A549 (cell line): ENCODE measurements at regions of chr10 and their contacts with region 1.

Region 1: GRCh38 chr10:49592726-49593563 is 17.2 kb upstream of the SLC18A3 start:
- DNase-seq: peak; percentile 62 to 79
- ATAC-seq: peak; percentile 81 to 93
- H3K4me3 ChIP-seq: no peak overlapping the region
- H3K27ac ChIP-seq: no peak overlapping the region
- H3K4me1 ChIP-seq: no peaks in the 10 kb centered on the region
- CTCF ChIP-seq: peak; percentile 77
- EP300 ChIP-seq: no peak
- POLR2A ChIP-seq: no peak
- RAD21 ChIP-seq: peak; percentile 45 to 57; a peak in 3 of 5 replicates

Region 2: DNA sequence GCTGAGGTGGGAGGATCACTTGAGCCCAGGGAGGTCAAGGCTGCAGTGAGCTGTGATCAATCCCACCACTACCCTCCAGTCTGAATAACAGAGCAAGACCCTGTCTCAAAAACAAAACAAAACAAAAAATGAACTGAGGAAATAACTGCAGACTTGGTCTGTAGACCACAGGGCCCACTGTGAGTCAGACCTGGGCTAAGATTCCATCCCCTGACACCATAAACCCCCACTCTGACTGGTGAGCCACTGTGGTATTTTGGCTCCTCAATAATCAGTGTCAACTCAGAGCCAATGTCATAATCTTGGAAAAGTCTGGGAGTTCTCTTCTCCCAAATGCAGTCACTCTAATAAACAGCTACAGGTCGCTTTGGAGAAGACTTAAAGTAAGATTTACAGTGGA is 30.1 kb before region 1 on chr10:
- CTCF ChIA-PET with region 1: interaction called, 16 read pairs
- POLR2A ChIA-PET with region 1: no interaction called
- DNase-seq: no peak
- ATAC-seq: no peak
- H3K4me3 ChIP-seq: no peak overlapping the region
- H3K27ac ChIP-seq: no peak overlapping the region
- H3K4me1 ChIP-seq: no peaks in the 10 kb centered on the region
- CTCF ChIP-seq: no peak
- EP300 ChIP-seq: no peak
- POLR2A ChIP-seq: no peak
- RAD21 ChIP-seq: no peak

Region 3: GRCh38 chr10:49579621-49580020 is 13.3 kb before region 1 on chr10:
- CTCF ChIA-PET with region 1: interaction called, 18 read pairs
- POLR2A ChIA-PET with region 1: no interaction called
- DNase-seq: no peak
- ATAC-seq: no peak
- H3K4me3 ChIP-seq: no peak overlapping the region
- H3K27ac ChIP-seq: no peak overlapping the region
- H3K4me1 ChIP-seq: no peaks in the 10 kb centered on the region
- CTCF ChIP-seq: no peak
- EP300 ChIP-seq: no peak
- POLR2A ChIP-seq: no peak
- RAD21 ChIP-seq: no peak

Region 4: DNA sequence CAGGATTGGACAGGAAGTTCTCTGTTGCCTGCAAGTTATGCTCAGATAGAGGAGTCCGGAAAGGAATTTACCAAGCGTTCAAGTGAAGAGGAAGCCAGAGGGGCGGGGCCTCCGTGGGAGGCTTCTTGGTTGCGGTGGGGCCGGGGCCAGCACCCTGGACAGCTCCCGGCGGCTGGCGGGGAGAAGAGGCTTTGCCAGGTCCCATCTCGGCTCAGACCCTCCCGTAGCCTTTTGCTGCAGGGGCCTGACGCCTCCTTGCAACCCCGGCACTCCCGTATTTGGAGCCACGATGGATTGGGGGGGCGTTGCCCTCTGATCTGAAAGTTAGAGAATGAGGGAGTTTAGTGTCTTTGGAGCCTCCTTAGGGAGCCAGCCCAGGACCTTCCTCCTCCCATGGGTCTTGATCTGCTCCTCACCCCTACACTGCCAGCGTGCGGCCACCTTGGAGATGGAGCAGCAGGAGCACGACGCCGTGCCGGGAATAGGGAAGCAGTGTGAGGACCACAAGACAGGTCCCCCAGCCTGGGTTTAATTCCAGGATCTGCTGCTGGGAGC is 14.1 kb after region 1 on chr10:
- CTCF ChIA-PET with region 1: interaction called, 51 read pairs
- POLR2A ChIA-PET with region 1: no interaction called
- DNase-seq: peak; percentile 34 to 42
- ATAC-seq: peak; percentile 70 to 80
- H3K4me3 ChIP-seq: no peak overlapping the region
- H3K27ac ChIP-seq: no peak overlapping the region
- H3K4me1 ChIP-seq: no peaks in the 10 kb centered on the region; the same call in 2 of the 3 replicates
- CTCF ChIP-seq: no peak
- EP300 ChIP-seq: no peak
- POLR2A ChIP-seq: no peak
- RAD21 ChIP-seq: no peak

Region 5: GRCh38 chr10:49619613-49620012 is 26.7 kb after region 1 on chr10:
- CTCF ChIA-PET with region 1: interaction called, 11 read pairs
- POLR2A ChIA-PET with region 1: no interaction called
- DNase-seq: no peak
- ATAC-seq: peak in 1 of 2 experiments; percentile 44; a peak in 2 of 6 replicates
- H3K4me3 ChIP-seq: no peak overlapping the region
- H3K27ac ChIP-seq: no peak overlapping the region
- H3K4me1 ChIP-seq: no peaks in the 10 kb centered on the region
- CTCF ChIP-seq: no peak
- EP300 ChIP-seq: no peak
- POLR2A ChIP-seq: no peak
- RAD21 ChIP-seq: no peak

Region 6: DNA sequence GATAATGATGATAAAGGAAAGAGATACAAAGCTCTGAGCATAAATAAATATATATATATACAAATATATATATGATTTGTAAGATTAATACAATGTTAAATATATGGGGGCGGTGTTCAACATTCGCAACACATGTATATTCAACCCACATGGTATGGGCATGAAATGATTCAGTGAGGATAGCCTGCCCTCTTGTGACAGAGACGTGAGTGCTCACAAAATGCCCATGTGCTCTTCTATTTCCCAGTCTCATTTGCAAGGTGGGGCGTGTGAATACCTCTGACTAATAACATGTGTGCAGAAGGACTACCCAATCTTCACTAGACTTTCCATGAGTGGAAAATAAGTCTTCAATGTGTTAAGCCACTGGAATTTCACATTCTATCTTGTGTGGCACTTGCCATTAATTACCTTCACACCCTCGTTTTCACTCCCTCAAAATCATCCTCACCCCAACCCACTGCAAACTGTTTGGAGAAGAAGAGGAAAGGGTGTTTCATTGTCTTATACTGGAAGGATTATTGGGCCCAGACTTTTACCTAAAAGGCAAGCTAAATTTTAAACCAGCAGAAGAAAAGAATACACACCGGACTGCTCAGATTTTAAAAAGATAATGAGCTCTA is 631.5 kb after region 1 on chr10:
- CTCF ChIA-PET with region 1: interaction called, 54 read pairs
- POLR2A ChIA-PET with region 1: no interaction called
- DNase-seq: peak; percentile 27 to 72
- ATAC-seq: peak; percentile 97 to 99
- H3K4me3 ChIP-seq: no peak overlapping the region
- H3K27ac ChIP-seq: no peak overlapping the region
- H3K4me1 ChIP-seq: no peaks in the 10 kb centered on the region
- CTCF ChIP-seq: peak; percentile 72
- EP300 ChIP-seq: no peak
- POLR2A ChIP-seq: no peak
- RAD21 ChIP-seq: peak; percentile 76 to 79